ENCODE measurements at regions of chr22 and their contacts with region 1.

Region 1: GRCh38 chr22:20079745-20080444 is at the start of gene DGCR8:
- DNase-seq: peak; percentile 96
- ATAC-seq: peak; percentile 98
- total RNA-seq, gene DGCR8: 18.0 TPM

Region 2: DNA sequence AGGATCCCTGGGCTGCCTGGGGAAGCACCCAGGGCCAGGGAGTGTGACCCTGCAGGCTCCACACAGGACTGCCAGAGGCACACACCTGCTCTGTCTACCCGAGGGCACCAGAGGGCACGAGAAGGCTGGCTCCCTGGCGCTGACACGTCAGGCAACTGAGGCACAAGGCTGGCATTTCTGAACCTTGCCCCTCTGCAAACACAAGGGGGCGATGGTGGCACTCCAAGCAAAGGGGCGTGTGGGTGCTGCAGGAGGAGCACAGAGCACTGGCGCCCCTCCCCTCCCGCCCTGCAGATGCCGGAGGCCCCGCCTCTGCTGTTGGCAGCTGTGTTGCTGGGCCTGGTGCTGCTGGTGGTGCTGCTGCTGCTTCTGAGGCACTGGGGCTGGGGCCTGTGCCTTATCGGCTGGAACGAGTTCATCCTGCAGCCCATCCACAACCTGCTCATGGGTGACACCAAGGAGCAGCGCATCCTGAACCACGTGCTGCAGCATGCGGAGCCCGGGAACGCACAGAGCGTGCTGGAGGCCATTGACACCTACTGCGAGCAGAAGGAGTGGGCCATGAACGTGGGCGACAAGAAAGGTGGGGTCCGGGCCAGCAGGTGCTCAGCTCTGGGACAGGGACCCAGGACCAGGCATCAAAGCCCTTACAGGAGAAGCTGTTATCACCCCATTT is 117.5 kb before region 1 on chr22:
- intact Hi-C with region 1: loop called (anchors 10 kb)
- DNase-seq: peak; percentile 77
- ATAC-seq: no peak

Region 3: DNA sequence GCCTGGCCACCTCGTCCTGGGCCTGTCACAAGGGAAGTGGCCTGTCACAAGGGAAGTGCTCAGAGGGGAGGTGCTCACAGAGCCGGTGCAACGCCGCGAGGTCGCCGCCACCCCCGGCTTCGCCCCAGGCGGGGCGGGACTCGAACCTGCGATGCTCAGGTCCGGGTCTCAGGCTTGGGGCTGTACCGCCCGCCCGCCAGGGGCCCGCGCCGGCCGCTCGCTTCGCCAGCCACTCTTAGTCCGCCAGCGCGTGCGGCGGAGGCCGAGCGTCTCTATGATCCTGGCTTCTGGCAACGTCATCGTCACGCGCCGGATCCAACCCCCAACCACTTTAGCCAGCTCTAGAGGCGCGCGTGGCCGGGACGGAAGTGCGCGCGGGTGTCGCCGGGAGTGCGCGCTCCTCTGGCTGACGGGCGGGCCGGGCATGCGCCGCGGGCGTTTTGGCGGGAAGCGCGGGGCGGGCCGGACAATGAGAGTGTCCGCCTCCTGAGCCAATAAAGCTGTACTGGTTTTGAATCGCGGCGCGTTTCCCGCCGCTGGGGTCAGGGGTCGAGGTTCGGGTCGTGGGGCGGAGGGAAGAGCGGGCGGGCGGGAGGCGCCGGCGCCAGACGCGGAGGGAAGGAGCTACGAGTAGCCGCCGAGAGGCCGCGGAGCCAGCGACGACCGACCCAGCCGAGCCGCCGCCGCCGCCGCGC is 37.2 kb after region 1 on chr22 and contains the start of gene TRMT2A:
- intact Hi-C with region 1: loop called (anchors 5 kb)
- DNase-seq: peak; percentile 99
- ATAC-seq: peak; percentile 95
- total RNA-seq, gene TRMT2A: 24.5 TPM

Measured in Right ventricle myocardium inferior (tissue), 1 donor.